ENCODE measurements at regions of chr1 and their contacts with region 1.

Region 1: GRCh38 chr1:46595127-46595526 is 8.9 kb downstream of the MKNK1 start:
- DNase-seq: no peak
- ATAC-seq: no peak
- H3K4me3 Mint-ChIP-seq: peak overlapping the region; percentile 53
- H3K27ac Mint-ChIP-seq: peak overlapping the region; percentile 31
- H3K4me1 Mint-ChIP-seq: peaks cover 61% of the 10 kb centered on the region
- H3K27me3 Mint-ChIP-seq: no peaks in the 10 kb centered on the region

Region 2: DNA sequence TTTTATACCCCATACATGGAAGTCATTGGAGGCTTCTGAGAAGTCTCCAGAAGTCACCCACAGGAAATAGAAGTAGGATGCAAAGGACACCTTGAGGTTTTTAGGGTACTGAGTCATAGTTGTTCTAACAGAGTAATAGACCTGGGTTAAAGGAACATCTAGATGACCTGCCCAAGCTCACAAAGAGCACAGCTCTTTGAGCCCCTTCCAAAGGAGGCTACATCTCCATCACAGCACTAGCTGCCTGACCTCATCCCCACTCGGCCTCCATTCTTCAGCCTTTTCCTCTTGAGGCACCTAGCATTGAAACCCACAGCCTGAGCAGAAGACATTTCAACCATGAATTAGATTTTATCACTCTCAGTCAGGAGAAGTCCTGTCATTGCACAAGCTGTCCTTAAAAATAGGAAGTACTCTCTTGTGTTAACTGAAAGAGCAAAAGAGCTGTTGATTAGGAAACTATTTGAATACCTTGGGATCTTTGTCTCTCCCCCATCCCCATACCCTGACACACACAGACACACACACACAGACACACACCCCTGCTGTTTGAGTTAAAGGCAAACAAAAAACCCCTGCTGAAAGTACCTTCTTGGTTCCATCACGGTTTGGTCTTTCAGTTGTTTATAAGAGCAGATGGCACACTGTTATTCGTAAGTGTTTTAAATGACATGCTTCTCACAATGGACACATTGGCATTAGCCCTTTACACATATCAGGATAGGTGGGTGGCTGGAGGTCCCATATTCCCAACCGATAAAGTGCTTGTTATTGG is 13.3 kb before region 1 on chr1:
- POLR2A ChIA-PET with region 1: interaction called, 14 read pairs
- DNase-seq: peak; percentile 53
- ATAC-seq: peak; percentile 96
- H3K4me3 Mint-ChIP-seq: peak overlapping the region; percentile 75
- H3K27ac Mint-ChIP-seq: peak overlapping the region; percentile 90
- H3K4me1 Mint-ChIP-seq: peaks cover 39% of the 10 kb centered on the region
- H3K27me3 Mint-ChIP-seq: no peaks in the 10 kb centered on the region

Region 3: GRCh38 chr1:46653405-46653958 is 58.4 kb after region 1 on chr1:
- POLR2A ChIA-PET with region 1: no interaction called
- DNase-seq: no peak
- ATAC-seq: no peak
- H3K4me3 Mint-ChIP-seq: no peak overlapping the region
- H3K27ac Mint-ChIP-seq: no peak overlapping the region
- H3K4me1 Mint-ChIP-seq: peaks cover 2% of the 10 kb centered on the region
- H3K27me3 Mint-ChIP-seq: no peaks in the 10 kb centered on the region

Measured in activated naive CD8-positive, alpha-beta T cell treated with anti-CD3 and anti-CD28 coated beads, Interleukin-2, amount 10 ng/mL, durations not matched to agents 7 days and 5 days (primary cell).